GM10248 (cell line): ENCODE measurements at regions of chr12 and their contacts with region 1.

Region 1: GRCh38 chr12:43267818-43268217 is 284.2 kb downstream of the ADAMTS20 start:
- DNase-seq: no peak
- CTCF ChIP-seq: no peak

Region 2: GRCh38 chr12:43198608-43199007 is 69.2 kb before region 1 on chr12:
- CTCF ChIA-PET with region 1: no interaction called
- POLR2A ChIA-PET with region 1: no interaction called
- DNase-seq: no peak
- CTCF ChIP-seq: no peak

Region 3: DNA sequence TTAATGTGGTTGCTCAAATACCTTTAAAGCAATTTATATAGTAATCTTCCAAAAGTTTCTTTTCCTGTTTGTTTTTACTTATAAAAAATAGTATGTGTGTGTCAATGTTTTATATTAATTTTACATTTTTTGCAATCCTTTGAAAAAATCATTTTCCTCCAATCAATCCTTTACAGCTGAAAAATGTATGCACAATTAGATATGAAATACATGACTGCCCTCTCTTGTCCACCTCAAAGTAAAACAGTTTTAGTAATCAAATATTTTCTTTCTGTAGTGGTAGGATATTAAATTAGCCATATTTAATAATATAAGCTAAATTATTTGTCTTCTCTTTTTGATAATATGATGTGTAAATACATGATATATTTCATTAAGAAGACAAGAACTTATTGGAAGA is 14.3 kb after region 1 on chr12:
- CTCF ChIA-PET with region 1: interaction called, 39 read pairs
- POLR2A ChIA-PET with region 1: no interaction called
- DNase-seq: no peak
- CTCF ChIP-seq: peak; percentile 34